Posterior cingulate gyrus (tissue), 11 donors: ENCODE measurements at regions of chr2 and their contacts with region 1.

Region 1: GRCh38 chr2:20051532-20052228 is at the start of gene LAPTM4A:
- DNase-seq: peak; percentile 96 to 100 (median 98)

Region 2: GRCh38 chr2:19989681-19990415 is 61.8 kb before region 1 on chr2 and contains the start of gene WDR35:
- intact Hi-C with region 1: loop called (anchors 2 kb)
- DNase-seq: peak; percentile 82 to 98 (median 89)

Region 3: DNA sequence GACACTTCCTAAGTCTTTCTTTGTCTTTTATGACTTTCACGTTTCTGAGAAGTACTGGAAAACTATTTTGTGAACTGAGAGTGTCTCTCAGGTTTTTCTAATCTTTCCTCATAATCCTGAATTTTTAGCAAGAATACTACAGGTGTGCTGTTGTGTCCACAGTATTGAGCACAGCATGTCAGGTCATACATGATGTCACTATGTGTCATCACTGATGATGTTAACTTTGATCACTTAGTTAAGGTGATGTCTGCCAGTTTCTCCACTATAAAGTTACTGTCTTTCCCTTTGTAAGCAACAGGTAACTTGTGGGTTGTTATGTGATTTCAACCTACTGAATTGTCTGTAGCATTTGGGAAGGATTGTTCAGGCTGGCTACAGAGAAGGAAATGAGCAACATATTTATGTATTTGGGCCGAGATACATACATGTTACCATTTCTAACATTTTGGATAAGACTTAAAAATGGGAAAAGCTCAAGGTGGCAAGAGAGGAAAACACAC is 50.3 kb before region 1 on chr2:
- intact Hi-C with region 1: no loop called
- DNase-seq: no peak

Region 4: DNA sequence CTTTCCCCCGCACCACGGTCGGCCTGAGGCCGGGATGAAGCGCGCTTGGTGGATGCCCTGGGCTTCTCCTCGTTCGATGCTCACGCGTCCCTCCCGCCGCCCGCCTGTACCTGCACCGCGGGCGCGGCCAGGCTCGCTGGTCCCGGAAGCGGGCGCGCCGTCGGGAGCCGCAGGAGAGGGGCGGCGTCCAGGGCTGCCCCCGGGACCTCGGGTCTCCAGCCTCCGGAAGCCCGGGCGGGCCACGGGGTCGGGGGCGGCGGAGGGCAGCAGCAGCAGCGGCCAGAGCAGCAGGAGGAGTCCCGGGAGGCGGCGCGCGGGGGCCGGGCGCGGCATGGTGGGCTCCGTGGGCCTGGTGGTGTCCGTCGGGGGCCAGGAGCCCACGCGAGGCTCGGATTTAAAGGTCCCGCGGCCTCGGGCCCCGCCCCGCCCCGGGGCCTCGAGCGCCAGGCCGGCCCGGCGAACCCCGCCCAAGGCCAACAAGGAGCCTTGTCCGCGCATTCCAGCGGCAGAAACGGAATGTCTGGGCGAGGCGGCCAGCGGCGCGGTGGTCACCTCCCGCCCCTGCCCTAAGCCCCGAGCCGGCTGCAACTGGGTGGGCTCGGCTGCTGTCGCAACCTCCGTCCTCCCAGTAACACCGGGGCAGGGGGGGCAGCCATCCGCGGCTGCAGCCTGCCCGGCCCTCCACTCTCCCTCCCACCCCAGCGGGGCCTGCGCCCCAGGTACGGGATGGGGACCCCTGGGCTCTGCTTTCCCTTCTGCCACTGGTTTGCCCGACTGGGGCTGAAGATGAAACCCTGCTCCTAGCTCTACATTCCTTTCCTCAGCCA is 39.2 kb before region 1 on chr2 and contains the start of gene MATN3:
- intact Hi-C with region 1: no loop called
- DNase-seq: peak in 1 of 10 donors; percentile 69